Mammary epithelial cell (primary cell): ENCODE measurements at regions of chr2 and their contacts with region 1.

Region 1: GRCh38 chr2:183967756-183968155 is 630.6 kb upstream of the ZNF804A start:
- DNase-seq: no peak
- H3K4me3 ChIP-seq: no peak overlapping the region
- H3K27ac ChIP-seq: no peak overlapping the region
- H3K4me1 ChIP-seq: no peaks in the 10 kb centered on the region
- H3K27me3 ChIP-seq: peaks cover 3% of the 10 kb centered on the region
- CTCF ChIP-seq: no peak

Region 2: GRCh38 chr2:183903026-183903425 is 64.7 kb before region 1 on chr2:
- CTCF ChIA-PET with region 1: no interaction called
- dilution Hi-C with region 1: no loop called
- in situ Hi-C with region 1: no loop called
- intact Hi-C with region 1: no loop called
- DNase-seq: no peak
- H3K4me3 ChIP-seq: no peak overlapping the region
- H3K27ac ChIP-seq: no peak overlapping the region
- H3K4me1 ChIP-seq: no peaks in the 10 kb centered on the region
- H3K27me3 ChIP-seq: no peaks in the 10 kb centered on the region
- CTCF ChIP-seq: no peak

Region 3: DNA sequence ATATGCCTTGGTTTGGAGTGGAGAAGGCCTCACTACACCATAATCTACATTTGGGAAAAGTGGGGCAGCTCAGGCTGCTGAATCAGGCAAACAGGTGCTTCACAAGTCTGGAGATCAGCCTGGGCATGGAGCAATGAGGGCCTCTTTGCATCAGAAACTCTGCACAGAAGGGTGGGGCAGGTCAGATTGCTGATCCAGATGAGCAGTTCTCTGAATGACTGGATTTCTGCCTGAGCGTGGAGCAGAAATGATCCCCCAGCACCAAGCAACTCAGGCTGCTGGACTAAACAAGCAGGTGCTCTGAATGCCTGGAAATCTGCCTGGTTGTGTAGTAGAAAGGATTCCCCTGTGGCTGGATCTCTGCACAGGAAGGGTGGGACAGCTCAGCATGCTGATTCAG is 25.3 kb after region 1 on chr2:
- CTCF ChIA-PET with region 1: no interaction called
- dilution Hi-C with region 1: no loop called
- in situ Hi-C with region 1: no loop called
- intact Hi-C with region 1: loop called (anchors 1 kb)
- DNase-seq: no peak
- H3K4me3 ChIP-seq: no peak overlapping the region
- H3K27ac ChIP-seq: no peak overlapping the region
- H3K4me1 ChIP-seq: peaks cover 7% of the 10 kb centered on the region
- H3K27me3 ChIP-seq: peaks cover 2% of the 10 kb centered on the region
- CTCF ChIP-seq: no peak

Region 4: GRCh38 chr2:184091456-184091855 is 123.7 kb after region 1 on chr2:
- CTCF ChIA-PET with region 1: no interaction called
- dilution Hi-C with region 1: no loop called
- in situ Hi-C with region 1: no loop called
- intact Hi-C with region 1: no loop called
- DNase-seq: no peak
- H3K4me3 ChIP-seq: no peak overlapping the region
- H3K27ac ChIP-seq: no peak overlapping the region
- H3K4me1 ChIP-seq: no peaks in the 10 kb centered on the region
- H3K27me3 ChIP-seq: no peaks in the 10 kb centered on the region
- CTCF ChIP-seq: no peak

Region 5: DNA sequence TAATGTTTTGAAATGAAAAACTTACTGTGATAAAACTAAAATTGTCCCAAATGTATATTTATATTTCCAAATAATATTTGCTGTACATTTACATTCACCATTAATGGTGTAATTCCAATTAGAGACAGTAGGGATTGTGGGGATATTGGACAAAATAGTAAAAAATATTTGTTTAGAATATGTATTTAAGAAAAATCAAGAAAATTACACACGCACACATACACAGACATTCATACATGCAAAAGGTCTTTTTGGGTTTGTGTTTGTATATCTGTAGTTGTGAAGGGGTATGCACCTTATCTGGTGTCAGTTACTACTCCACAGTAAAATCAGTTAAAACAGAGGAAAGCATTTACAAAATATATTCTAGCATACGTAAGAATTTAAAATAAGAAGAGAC is 194.7 kb after region 1 on chr2:
- CTCF ChIA-PET with region 1: no interaction called
- dilution Hi-C with region 1: no loop called
- in situ Hi-C with region 1: no loop called
- intact Hi-C with region 1: no loop called
- DNase-seq: no peak
- H3K4me3 ChIP-seq: no peak overlapping the region
- H3K27ac ChIP-seq: no peak overlapping the region
- H3K4me1 ChIP-seq: no peaks in the 10 kb centered on the region
- H3K27me3 ChIP-seq: no peaks in the 10 kb centered on the region
- CTCF ChIP-seq: no peak